GM12878 (cell line): ENCODE measurements at regions of chr5 and their contacts with region 1.

Region 1: GRCh38 chr5:138226910-138227309 is 13.8 kb upstream of the CDC23 start:
- DNase-seq: no peak
- ATAC-seq: peak; percentile 55
- H3K4me3 ChIP-seq: no peak overlapping the region
- H3K27ac ChIP-seq: no peak overlapping the region
- H3K4me1 ChIP-seq: no peaks in the 10 kb centered on the region
- H3K27me3 ChIP-seq: no peaks in the 10 kb centered on the region; a peak in 1 of 4 replicates
- CTCF ChIP-seq: no peak
- EP300 ChIP-seq: no peak
- POLR2A ChIP-seq: no peak
- RAD21 ChIP-seq: no peak

Region 2: DNA sequence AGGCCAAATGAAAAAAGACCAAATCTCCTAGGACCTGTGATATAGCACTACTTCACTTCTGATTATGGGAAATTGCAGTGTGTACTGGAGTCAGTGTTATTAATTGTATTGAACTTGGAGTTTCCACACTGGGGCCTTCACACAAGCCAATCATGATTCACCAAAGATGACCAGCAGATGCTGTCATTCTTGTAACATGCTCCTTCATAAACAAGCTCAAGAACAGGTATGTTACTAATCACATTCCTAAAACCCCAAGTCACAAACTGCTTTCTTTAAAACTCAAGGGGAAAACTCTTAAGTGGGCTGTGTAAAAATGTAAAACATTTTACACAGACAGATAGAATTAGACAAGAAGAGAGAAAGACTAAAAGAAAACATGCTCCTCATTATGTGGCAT is 496.6 kb before region 1 on chr5:
- CTCF ChIA-PET with region 1: no interaction called
- POLR2A ChIA-PET with region 1: no interaction called
- RAD21 ChIA-PET with region 1: no interaction called
- SMC1A ChIA-PET with region 1: no interaction called
- in situ Hi-C with region 1: no loop called
- intact Hi-C with region 1: no loop called
- DNase-seq: no peak
- ATAC-seq: no peak
- H3K4me3 ChIP-seq: no peak overlapping the region; the same call in 1 of the 2 replicates
- H3K27ac ChIP-seq: no peak overlapping the region
- H3K4me1 ChIP-seq: no peaks in the 10 kb centered on the region; the same call in 1 of the 2 replicates
- H3K27me3 ChIP-seq: no peaks in the 10 kb centered on the region
- CTCF ChIP-seq: no peak
- EP300 ChIP-seq: no peak
- POLR2A ChIP-seq: no peak
- RAD21 ChIP-seq: no peak

Region 3: DNA sequence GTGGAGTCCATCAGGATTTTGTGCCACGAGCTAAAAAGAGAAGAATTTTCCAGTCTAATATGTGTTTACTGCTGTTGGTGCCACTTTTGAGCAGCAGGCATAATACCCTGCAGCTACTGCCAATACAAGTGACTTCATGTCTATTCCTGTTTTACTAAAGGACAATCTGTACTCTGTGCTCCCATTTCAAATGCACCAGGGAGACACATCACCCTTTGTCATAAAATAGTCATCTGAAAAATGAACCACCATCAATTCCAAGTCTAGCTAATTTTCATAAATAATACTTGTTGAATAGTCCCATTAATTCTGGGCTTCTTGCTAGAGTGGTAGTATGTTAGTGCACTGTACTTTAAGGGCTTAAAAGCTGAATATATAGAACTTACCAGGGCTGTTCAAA is 346.6 kb before region 1 on chr5:
- CTCF ChIA-PET with region 1: no interaction called
- POLR2A ChIA-PET with region 1: no interaction called
- RAD21 ChIA-PET with region 1: no interaction called
- SMC1A ChIA-PET with region 1: no interaction called
- in situ Hi-C with region 1: no loop called
- intact Hi-C with region 1: no loop called
- DNase-seq: no peak
- ATAC-seq: no peak
- H3K4me3 ChIP-seq: no peak overlapping the region
- H3K27ac ChIP-seq: no peak overlapping the region
- H3K4me1 ChIP-seq: no peaks in the 10 kb centered on the region
- H3K27me3 ChIP-seq: no peaks in the 10 kb centered on the region
- CTCF ChIP-seq: no peak
- EP300 ChIP-seq: no peak
- POLR2A ChIP-seq: no peak
- RAD21 ChIP-seq: no peak

Region 4: GRCh38 chr5:138282920-138283742 is 56.2 kb after region 1 on chr5:
- CTCF ChIA-PET with region 1: interaction called, 3 read pairs
- POLR2A ChIA-PET with region 1: no interaction called
- RAD21 ChIA-PET with region 1: no interaction called
- SMC1A ChIA-PET with region 1: interaction called, 3 read pairs
- in situ Hi-C with region 1: no loop called
- intact Hi-C with region 1: loop called (anchors 1 kb)
- DNase-seq: no peak
- ATAC-seq: peak; percentile 78
- H3K4me3 ChIP-seq: no peak overlapping the region
- H3K27ac ChIP-seq: no peak overlapping the region
- H3K4me1 ChIP-seq: no peaks in the 10 kb centered on the region
- H3K27me3 ChIP-seq: no peaks in the 10 kb centered on the region
- CTCF ChIP-seq: peak; percentile 44 to 50 (median 44); a peak in 5 of 6 replicates
- EP300 ChIP-seq: no peak
- POLR2A ChIP-seq: no peak
- RAD21 ChIP-seq: peak; percentile 63